Activated CD4-positive, alpha-beta memory T cell treated with anti-CD3 and anti-CD28 coated beads, Interleukin-2, amount 10 ng/mL, durations not matched to agents 7 days and 5 days (primary cell): ENCODE measurements at regions of chr16 and their contacts with region 1.

Region 1: DNA sequence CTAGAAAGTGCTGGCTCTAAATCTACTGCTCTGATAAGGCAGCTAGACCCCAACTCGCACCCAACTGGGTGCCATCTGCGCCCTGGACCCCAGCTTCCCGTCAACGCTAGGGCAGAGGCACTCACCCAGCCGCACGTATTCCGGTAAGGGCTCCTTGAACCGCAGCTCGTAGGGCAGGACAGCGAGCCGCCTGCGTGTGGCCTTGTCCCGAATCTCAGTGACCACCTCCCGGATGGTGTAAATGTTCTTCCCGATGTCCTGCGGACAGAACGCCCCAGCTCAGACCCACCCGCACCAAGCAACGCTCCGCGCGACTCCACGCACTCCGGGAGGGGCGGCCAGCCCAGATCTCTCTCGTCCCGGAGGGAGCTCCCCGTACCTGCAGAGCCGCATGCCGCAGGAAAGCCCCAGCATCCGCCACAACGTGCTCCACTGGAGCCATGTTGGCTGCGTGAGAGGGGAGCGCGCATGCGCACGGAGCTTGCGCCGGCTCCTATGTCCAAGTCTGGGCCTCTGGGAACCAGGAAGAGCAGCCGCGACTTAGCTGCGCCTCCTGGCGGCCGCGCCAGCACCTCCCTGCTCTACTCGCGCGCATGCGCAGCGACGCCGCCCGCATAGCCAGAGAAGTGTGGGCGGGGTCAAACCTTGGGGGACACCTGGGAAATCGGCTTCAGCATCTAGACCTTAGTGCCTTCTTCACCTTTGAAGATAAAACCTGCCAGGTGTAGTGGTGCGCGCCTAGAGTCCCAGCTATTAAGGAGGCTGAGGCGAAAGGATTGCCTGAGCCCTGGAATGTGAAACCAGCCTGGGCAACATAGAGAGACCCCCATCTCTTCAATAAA is at the start of gene NOB1:
- DNase-seq: peak; percentile 97
- H3K4me3 Mint-ChIP-seq: peak within 1 kb of the TSS; percentile 100
- H3K27ac Mint-ChIP-seq: peak within 1 kb of the TSS; percentile 92
- H3K4me1 Mint-ChIP-seq: peaks cover 35% of the 10 kb centered on the region
- H3K27me3 Mint-ChIP-seq: no peaks in the 10 kb centered on the region
- total RNA-seq, gene NOB1: 60.6 to 62.5 TPM

Region 2: GRCh38 chr16:69396187-69397061 is 358.3 kb before region 1 on chr16:
- CTCF ChIA-PET with region 1: interaction called, 32 read pairs
- POLR2A ChIA-PET with region 1: interaction called, 16 read pairs
- DNase-seq: peak; percentile 69
- H3K4me3 Mint-ChIP-seq: no peak overlapping the region
- H3K27ac Mint-ChIP-seq: peak overlapping the region; percentile 7
- H3K4me1 Mint-ChIP-seq: peaks cover 14% of the 10 kb centered on the region
- H3K27me3 Mint-ChIP-seq: peaks cover 15% of the 10 kb centered on the region

Region 3: DNA sequence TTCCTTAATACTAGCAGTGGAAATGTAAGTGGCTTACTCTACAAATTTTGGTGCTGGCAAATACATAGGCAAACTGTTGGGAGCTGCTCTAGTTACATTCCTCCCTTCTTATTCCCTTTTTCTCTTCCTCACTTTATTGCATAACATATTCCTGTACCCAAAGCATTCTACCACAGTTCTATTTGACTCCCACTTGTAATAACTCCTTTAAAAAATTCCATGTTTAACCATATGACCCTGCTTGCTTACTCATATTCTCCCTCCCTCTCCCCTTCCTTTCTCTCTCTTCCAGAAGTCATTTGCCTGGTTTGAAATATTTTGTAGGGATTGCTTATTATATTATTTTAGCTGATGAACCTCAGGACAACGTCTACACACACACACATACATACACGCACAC is 51.1 kb before region 1 on chr16:
- CTCF ChIA-PET with region 1: interaction called, 70 read pairs
- POLR2A ChIA-PET with region 1: interaction called, 6 read pairs
- DNase-seq: no peak
- H3K4me3 Mint-ChIP-seq: no peak overlapping the region
- H3K27ac Mint-ChIP-seq: no peak overlapping the region
- H3K4me1 Mint-ChIP-seq: no peaks in the 10 kb centered on the region
- H3K27me3 Mint-ChIP-seq: no peaks in the 10 kb centered on the region

Region 4: GRCh38 chr16:69726296-69727060 is 28.2 kb before region 1 on chr16 and contains the start of gene NQO1:
- CTCF ChIA-PET with region 1: interaction called, 87 read pairs
- POLR2A ChIA-PET with region 1: interaction called, 84 read pairs
- DNase-seq: peak; percentile 95
- H3K4me3 Mint-ChIP-seq: peak within 1 kb of the TSS; percentile 89
- H3K27ac Mint-ChIP-seq: peak within 1 kb of the TSS; percentile 90
- H3K4me1 Mint-ChIP-seq: peaks cover 59% of the 10 kb centered on the region
- H3K27me3 Mint-ChIP-seq: no peaks in the 10 kb centered on the region
- total RNA-seq, gene NQO1: 31.2 to 35.6 TPM

Region 5: DNA sequence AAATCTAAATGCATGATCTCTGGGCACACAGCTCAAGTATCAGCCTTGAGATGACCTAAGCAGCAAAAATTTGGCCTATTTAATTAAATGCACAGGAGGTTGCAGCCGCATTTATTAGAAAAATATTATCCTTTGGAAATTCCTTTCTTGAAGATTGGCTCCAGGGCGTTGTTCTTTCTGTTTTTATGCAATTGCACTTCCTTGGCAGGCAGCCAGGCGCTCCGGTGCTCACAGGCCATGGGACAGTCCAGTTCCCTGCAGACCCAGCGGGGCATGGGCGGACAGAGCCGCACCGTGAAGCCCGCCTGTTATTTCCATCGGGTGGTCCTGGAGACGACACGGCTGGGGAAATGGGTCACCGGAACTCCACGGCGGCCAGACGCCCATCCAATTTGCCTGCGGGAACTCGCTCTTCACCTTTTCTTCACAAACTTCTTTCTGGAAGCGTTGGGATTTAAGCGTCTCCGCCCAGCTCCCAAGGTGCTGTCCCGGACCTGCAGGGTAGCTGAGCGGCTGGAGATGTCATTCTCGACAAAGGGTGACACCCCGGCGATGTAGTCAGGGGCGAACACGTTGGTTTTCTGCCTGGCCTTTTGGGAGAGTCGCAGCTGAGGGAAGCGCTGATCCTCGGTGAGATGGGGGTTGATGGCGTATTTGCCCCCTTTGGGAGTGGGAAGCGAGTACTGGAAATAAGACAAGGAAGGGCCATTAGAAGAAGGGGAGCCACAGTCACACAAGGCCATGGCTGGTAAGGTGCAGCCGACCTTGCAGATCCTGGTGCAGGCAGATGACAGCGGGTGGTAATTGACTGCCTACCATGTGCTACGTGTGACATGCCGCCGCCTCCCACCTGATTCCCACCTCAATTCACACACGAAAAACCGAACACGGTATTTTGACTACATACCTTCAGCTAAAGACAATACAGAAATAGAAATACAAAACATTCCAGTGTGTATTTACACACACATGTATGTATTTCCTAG is 12.5 kb before region 1 on chr16:
- CTCF ChIA-PET with region 1: interaction called, 7 read pairs
- POLR2A ChIA-PET with region 1: interaction called, 10 read pairs
- DNase-seq: no peak
- H3K4me3 Mint-ChIP-seq: no peak overlapping the region
- H3K27ac Mint-ChIP-seq: no peak overlapping the region
- H3K4me1 Mint-ChIP-seq: no peaks in the 10 kb centered on the region
- H3K27me3 Mint-ChIP-seq: no peaks in the 10 kb centered on the region